Heart left ventricle (tissue), 16 donors: ENCODE measurements at regions of chr7 and their contacts with region 1.

Region 1: GRCh38 chr7:155489862-155490696 is 32.1 kb downstream of the EN2 start:
- DNase-seq: no peak
- ATAC-seq: peak; percentile 24 to 78 (median 47)
- H3K4me3 ChIP-seq: peak overlapping the region in 11 of 12 donors; percentile 16 to 57 (median 46)
- H3K27ac ChIP-seq: peak overlapping the region in 8 of 12 donors; percentile 17 to 63 (median 30)
- H3K4me1 ChIP-seq: peaks cover 0 to 21% (median 6%) of the 10 kb centered on the region in 12 donors
- H3K27me3 ChIP-seq: peaks cover 0 to 86% (median 28%) of the 10 kb centered on the region in 9 donors
- CTCF ChIP-seq: no peak
- POLR2A ChIP-seq: no peak

Region 2: GRCh38 chr7:155439311-155440017 is 50.6 kb before region 1 on chr7:
- intact Hi-C with region 1: loop called in 1 of 10 experiments (anchors 5 kb)
- DNase-seq: peak in 1 of 5 donors; percentile 56
- ATAC-seq: no peak
- H3K4me3 ChIP-seq: no peak overlapping the region
- H3K27ac ChIP-seq: no peak overlapping the region
- H3K4me1 ChIP-seq: no peaks in the 10 kb centered on the region
- H3K27me3 ChIP-seq: peaks cover 0 to 87% (median 55%) of the 10 kb centered on the region in 9 donors
- CTCF ChIP-seq: no peak
- POLR2A ChIP-seq: no peak

Region 3: DNA sequence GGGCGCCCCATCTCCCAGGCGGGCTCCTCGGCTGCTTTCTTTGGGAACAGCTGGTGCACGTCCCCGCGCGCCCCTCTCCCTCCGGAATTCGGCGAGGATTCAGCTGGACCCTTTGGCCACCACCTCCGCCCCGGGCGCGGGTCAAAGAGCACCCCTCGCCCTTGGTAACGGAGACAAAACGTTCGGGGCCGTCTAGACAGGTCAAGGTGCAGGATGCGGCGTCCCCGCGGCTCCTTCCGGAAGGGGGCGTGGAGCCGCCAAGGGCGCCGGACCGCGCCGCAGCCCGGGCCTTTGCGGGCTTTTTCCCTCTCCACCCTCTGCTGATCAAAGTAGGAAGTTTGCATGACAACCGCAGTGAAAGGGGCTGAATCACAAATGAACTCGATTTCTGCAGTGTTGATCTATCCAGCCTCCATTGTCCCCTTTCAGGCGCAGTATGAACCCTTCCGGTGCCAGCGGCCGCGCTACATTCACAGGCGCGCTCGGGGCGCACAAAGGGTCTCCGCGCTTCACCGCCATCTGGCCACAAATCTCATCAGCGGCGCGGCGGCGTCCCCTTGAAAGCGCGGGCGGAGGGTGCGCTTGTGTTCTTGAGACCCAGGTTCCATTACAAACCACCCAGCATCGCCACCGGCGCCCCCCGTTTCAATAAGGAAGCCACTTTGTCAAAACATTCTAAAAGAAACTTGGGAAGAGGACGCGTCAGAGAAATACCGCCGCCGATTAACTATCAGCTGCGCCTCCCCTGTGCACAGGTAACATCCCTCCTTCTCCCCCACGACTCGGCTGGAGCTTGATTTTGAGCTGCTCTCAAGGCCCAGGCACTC is 19.9 kb after region 1 on chr7:
- intact Hi-C with region 1: no loop called
- DNase-seq: no peak
- ATAC-seq: no peak
- H3K4me3 ChIP-seq: peak overlapping the region in 4 of 12 donors; percentile 8 to 19 (median 10)
- H3K27ac ChIP-seq: no peak overlapping the region
- H3K4me1 ChIP-seq: peaks cover 0 to 10% (median 0%) of the 10 kb centered on the region in 12 donors
- H3K27me3 ChIP-seq: peaks cover 62 to 99% (median 91%) of the 10 kb centered on the region in 9 donors
- CTCF ChIP-seq: no peak
- POLR2A ChIP-seq: no peak